ENCODE measurements at regions of chr3 and their contacts with region 1.

Region 1: GRCh38 chr3:168068346-168068745 is 27.4 kb downstream of the GOLIM4 start:
- DNase-seq: no peak
- H3K4me3 Mint-ChIP-seq: no peak overlapping the region
- H3K27ac Mint-ChIP-seq: no peak overlapping the region
- H3K4me1 Mint-ChIP-seq: no peaks in the 10 kb centered on the region
- H3K27me3 Mint-ChIP-seq: no peaks in the 10 kb centered on the region

Region 2: GRCh38 chr3:167918686-167919085 is 149.7 kb before region 1 on chr3:
- CTCF ChIA-PET with region 1: no interaction called
- intact Hi-C with region 1: no loop called
- DNase-seq: no peak
- H3K4me3 Mint-ChIP-seq: no peak overlapping the region
- H3K27ac Mint-ChIP-seq: no peak overlapping the region
- H3K4me1 Mint-ChIP-seq: no peaks in the 10 kb centered on the region
- H3K27me3 Mint-ChIP-seq: no peaks in the 10 kb centered on the region

Region 3: GRCh38 chr3:168116279-168116678 is 47.9 kb after region 1 on chr3:
- CTCF ChIA-PET with region 1: no interaction called
- intact Hi-C with region 1: loop called (anchors 1 kb)
- DNase-seq: no peak
- H3K4me3 Mint-ChIP-seq: no peak overlapping the region
- H3K27ac Mint-ChIP-seq: no peak overlapping the region
- H3K4me1 Mint-ChIP-seq: no peaks in the 10 kb centered on the region
- H3K27me3 Mint-ChIP-seq: no peaks in the 10 kb centered on the region

Region 4: GRCh38 chr3:168156479-168156878 is 88.1 kb after region 1 on chr3:
- CTCF ChIA-PET with region 1: no interaction called
- intact Hi-C with region 1: no loop called
- DNase-seq: no peak
- H3K4me3 Mint-ChIP-seq: no peak overlapping the region
- H3K27ac Mint-ChIP-seq: no peak overlapping the region
- H3K4me1 Mint-ChIP-seq: no peaks in the 10 kb centered on the region
- H3K27me3 Mint-ChIP-seq: peaks cover 12% of the 10 kb centered on the region

Region 5: DNA sequence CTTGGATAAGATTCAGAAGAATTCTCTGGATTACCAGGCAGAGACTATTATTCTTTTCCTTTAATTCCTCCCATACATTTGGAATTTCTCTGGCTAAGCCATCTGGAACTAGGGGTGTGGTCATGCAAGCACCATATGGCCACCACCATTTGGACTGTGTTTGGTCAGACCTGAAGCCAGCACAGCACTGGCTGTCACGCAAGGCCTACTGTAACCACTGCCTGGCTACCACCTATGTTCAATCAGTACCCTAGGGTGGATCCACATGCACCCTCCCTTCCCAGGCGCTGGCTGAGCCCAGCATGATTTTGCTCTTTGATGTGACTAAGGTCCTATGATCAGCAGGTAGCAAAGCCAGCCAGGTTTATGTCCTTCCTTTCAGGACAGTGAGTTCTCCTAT is 315.2 kb after region 1 on chr3:
- CTCF ChIA-PET with region 1: no interaction called
- intact Hi-C with region 1: no loop called
- DNase-seq: no peak
- H3K4me3 Mint-ChIP-seq: no peak overlapping the region
- H3K27ac Mint-ChIP-seq: no peak overlapping the region
- H3K4me1 Mint-ChIP-seq: no peaks in the 10 kb centered on the region
- H3K27me3 Mint-ChIP-seq: no peaks in the 10 kb centered on the region

Region 6: GRCh38 chr3:168531116-168531515 is 462.8 kb after region 1 on chr3:
- CTCF ChIA-PET with region 1: no interaction called
- intact Hi-C with region 1: no loop called
- DNase-seq: no peak
- H3K4me3 Mint-ChIP-seq: no peak overlapping the region
- H3K27ac Mint-ChIP-seq: no peak overlapping the region
- H3K4me1 Mint-ChIP-seq: no peaks in the 10 kb centered on the region
- H3K27me3 Mint-ChIP-seq: no peaks in the 10 kb centered on the region